CD14-positive monocyte (primary cell): ENCODE measurements at regions of chr12 and their contacts with region 1.

Region 1: GRCh38 chr12:53984901-53985709 is at the start of gene HOXC10:
- DNase-seq: peak; percentile 58 to 76 (median 62)
- H3K4me3 ChIP-seq: peak within 1 kb of the TSS in 1 of 3 experiments; percentile 63
- H3K4me3 Mint-ChIP-seq: peak within 1 kb of the TSS; percentile 62 to 89
- H3K27ac ChIP-seq: no peak within 1 kb of the TSS
- H3K27ac Mint-ChIP-seq: no peak within 1 kb of the TSS
- H3K4me1 ChIP-seq: peaks cover 30 to 36% of the 10 kb centered on the region in 2 donors
- H3K4me1 Mint-ChIP-seq: peaks cover 39% of the 10 kb centered on the region
- H3K27me3 ChIP-seq: peaks cover 90 to 100% of the 10 kb centered on the region in 2 donors
- H3K27me3 Mint-ChIP-seq: peaks cover 98 to 100% (median 100%) of the 10 kb centered on the region in 3 donors
- CTCF ChIP-seq: peak; percentile 32
- polyA plus RNA-seq, gene HOXC10: not detected

Region 2: DNA sequence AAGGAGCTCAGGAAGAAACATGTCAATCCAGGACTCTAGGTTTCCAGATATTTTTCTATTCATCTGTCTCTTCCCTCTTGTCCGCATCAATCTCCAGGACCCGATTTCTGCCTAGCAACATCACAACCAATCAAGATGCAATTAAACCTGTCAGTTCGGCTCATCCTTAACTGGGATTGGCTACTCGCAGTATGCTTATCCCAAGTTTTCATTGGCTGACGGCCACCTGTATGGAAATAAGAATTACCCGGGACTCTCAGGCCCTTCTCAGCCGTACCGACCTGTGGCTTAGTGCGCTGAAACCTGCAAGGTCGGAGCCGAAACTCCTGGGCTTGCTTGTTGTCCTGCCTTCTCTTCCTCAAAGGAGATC is 288.8 kb before region 1 on chr12:
- intact Hi-C with region 1: loop called in 1 of 2 experiments (anchors 10 kb)
- DNase-seq: peak in 2 of 3 donors; percentile 53
- H3K4me3 ChIP-seq: peak overlapping the region in 1 of 3 experiments; percentile 56
- H3K4me3 Mint-ChIP-seq: peak overlapping the region; percentile 68 to 93
- H3K27ac ChIP-seq: no peak overlapping the region
- H3K27ac Mint-ChIP-seq: no peak overlapping the region
- H3K4me1 ChIP-seq: peaks cover 23 to 27% of the 10 kb centered on the region in 2 donors
- H3K4me1 Mint-ChIP-seq: peaks cover 34% of the 10 kb centered on the region
- H3K27me3 ChIP-seq: peaks cover 91 to 96% of the 10 kb centered on the region in 2 donors
- H3K27me3 Mint-ChIP-seq: peaks cover 88 to 93% (median 91%) of the 10 kb centered on the region in 3 donors
- CTCF ChIP-seq: no peak